ENCODE measurements at regions of chr11 and their contacts with region 1.

Region 1: GRCh38 chr11:22304337-22304961 is 33.7 kb upstream of the SLC17A6 start:
- DNase-seq: peak; percentile 12
- H3K4me3 ChIP-seq: no peak overlapping the region
- H3K27ac ChIP-seq: no peak overlapping the region
- H3K4me1 ChIP-seq: no peaks in the 10 kb centered on the region
- H3K27me3 ChIP-seq: no peaks in the 10 kb centered on the region
- CTCF ChIP-seq: peak; percentile 55 to 57

Region 2: GRCh38 chr11:22169833-22170232 is 134.6 kb before region 1 on chr11:
- CTCF ChIA-PET with region 1: no interaction called
- dilution Hi-C with region 1: no loop called
- in situ Hi-C with region 1: no loop called
- intact Hi-C with region 1: loop called (anchors 5 kb)
- DNase-seq: no peak
- H3K4me3 ChIP-seq: no peak overlapping the region
- H3K27ac ChIP-seq: no peak overlapping the region
- H3K4me1 ChIP-seq: no peaks in the 10 kb centered on the region
- H3K27me3 ChIP-seq: no peaks in the 10 kb centered on the region
- CTCF ChIP-seq: peak in 1 of 2 donors; percentile 44

Region 3: GRCh38 chr11:22244986-22245592 is 59.4 kb before region 1 on chr11:
- CTCF ChIA-PET with region 1: no interaction called
- dilution Hi-C with region 1: no loop called
- in situ Hi-C with region 1: no loop called
- intact Hi-C with region 1: loop called (anchors 1 kb)
- DNase-seq: peak; percentile 12
- H3K4me3 ChIP-seq: no peak overlapping the region
- H3K27ac ChIP-seq: no peak overlapping the region
- H3K4me1 ChIP-seq: no peaks in the 10 kb centered on the region
- H3K27me3 ChIP-seq: peaks cover 9% of the 10 kb centered on the region
- CTCF ChIP-seq: peak; percentile 62 to 77